Activated B cell treated with CpG ODN at 0.5 μM for 24 hours (primary cell): ENCODE measurements at regions of chr13 and their contacts with region 1.

Region 1: GRCh38 chr13:50244713-50245574 is 229.7 kb downstream of the KCNRG start:
- DNase-seq: no peak
- ATAC-seq: peak; percentile 92
- H3K4me3 Mint-ChIP-seq: peak overlapping the region; percentile 2
- H3K27ac Mint-ChIP-seq: peak overlapping the region; percentile 91
- H3K4me1 Mint-ChIP-seq: peaks cover 40% of the 10 kb centered on the region
- H3K27me3 Mint-ChIP-seq: no peaks in the 10 kb centered on the region
- CTCF ChIP-seq: no peak

Region 2: GRCh38 chr13:50053844-50054243 is 191.1 kb before region 1 on chr13:
- CTCF ChIA-PET with region 1: no interaction called
- POLR2A ChIA-PET with region 1: no interaction called
- intact Hi-C with region 1: no loop called
- DNase-seq: no peak
- ATAC-seq: no peak
- H3K4me3 Mint-ChIP-seq: no peak overlapping the region
- H3K27ac Mint-ChIP-seq: no peak overlapping the region
- H3K4me1 Mint-ChIP-seq: peaks cover 32% of the 10 kb centered on the region
- H3K27me3 Mint-ChIP-seq: no peaks in the 10 kb centered on the region
- CTCF ChIP-seq: no peak

Region 3: DNA sequence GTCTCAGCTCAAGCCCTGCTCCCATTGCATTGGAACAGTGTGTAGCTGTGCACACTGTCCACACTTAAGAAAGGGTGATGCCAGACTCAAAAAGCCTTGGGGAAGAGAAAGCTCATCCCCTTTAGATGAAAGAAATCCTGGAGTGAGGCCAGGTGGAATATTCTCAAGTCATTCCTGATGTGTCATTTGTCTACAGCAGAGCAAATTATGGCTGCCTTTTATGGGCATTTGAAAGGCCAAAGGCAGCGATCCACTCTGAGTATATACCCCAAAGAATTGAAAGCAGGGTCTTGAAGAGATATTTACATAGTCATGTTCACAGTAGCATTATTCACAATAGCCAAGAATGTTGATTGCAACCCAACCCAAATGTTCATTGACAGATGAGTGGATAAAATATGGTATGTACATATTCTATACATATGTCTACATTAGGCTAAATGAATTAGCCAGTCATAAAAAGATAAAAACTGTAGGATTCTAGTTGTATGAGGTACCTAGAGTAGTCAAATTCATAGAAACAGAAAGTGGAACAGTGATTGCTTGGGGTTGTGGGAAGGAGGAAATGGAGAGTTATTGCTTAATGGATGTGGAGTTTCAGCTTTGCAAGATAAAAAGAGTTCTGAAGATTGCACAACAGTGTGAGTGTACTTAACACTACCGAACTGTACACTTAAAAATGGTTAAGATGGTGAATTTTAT is 14.8 kb before region 1 on chr13:
- CTCF ChIA-PET with region 1: interaction called, 3 read pairs
- POLR2A ChIA-PET with region 1: interaction called, 4 read pairs
- intact Hi-C with region 1: loop called (anchors 2 kb)
- DNase-seq: no peak
- ATAC-seq: peak; percentile 49
- H3K4me3 Mint-ChIP-seq: no peak overlapping the region
- H3K27ac Mint-ChIP-seq: peak overlapping the region; percentile 1
- H3K4me1 Mint-ChIP-seq: peaks cover 40% of the 10 kb centered on the region
- H3K27me3 Mint-ChIP-seq: no peaks in the 10 kb centered on the region
- CTCF ChIP-seq: no peak

Region 4: GRCh38 chr13:50284540-50284939 is 39.6 kb after region 1 on chr13:
- CTCF ChIA-PET with region 1: no interaction called
- POLR2A ChIA-PET with region 1: no interaction called
- intact Hi-C with region 1: loop called (anchors 5 kb)
- DNase-seq: no peak
- ATAC-seq: peak; percentile 52
- H3K4me3 Mint-ChIP-seq: no peak overlapping the region
- H3K27ac Mint-ChIP-seq: no peak overlapping the region
- H3K4me1 Mint-ChIP-seq: peaks cover 14% of the 10 kb centered on the region
- H3K27me3 Mint-ChIP-seq: no peaks in the 10 kb centered on the region
- CTCF ChIP-seq: no peak

Region 5: DNA sequence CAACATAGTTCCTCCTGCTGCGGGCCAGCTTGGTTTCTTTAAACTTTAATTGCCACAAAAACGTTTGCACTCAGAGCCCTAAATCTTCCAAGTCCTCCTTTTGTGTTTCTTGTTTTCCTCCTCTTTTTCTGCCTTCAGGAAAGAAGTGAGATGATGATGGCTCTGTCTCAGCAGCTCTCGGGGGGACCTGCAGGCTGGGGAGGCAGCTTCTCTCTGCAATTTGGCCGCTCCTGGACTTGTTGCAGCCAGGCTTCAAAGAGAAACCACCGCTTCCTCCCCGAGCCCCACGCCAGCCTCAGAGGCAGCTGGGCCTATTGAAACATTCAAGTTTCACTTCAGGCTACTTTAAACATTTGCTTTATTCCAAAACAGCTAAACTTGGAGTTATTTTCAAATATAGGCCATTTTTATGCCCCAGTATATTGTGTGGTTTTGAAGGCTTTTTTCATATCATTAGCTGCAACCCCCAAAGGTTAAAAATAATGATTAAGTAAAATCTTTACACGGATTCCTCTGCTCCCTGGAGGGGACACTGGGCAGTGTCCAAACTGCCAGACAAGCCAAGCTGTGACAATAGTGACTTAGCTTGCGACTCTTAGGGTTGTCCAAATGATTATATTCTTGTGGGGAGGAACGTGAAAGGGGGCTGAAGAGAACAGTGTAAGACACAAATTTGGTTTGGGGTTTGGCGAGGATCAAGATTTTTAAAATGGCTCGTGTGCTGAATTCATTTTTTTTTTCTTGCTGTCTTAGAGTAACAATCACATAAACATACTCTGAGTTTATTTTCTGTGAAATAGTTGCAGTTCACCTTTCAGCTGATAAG is 267.7 kb after region 1 on chr13:
- CTCF ChIA-PET with region 1: interaction called, 4 read pairs
- POLR2A ChIA-PET with region 1: interaction called, 5 read pairs
- intact Hi-C with region 1: loop called (anchors 2 kb)
- DNase-seq: peak; percentile 40
- ATAC-seq: peak; percentile 81
- H3K4me3 Mint-ChIP-seq: no peak overlapping the region
- H3K27ac Mint-ChIP-seq: no peak overlapping the region
- H3K4me1 Mint-ChIP-seq: peaks cover 3% of the 10 kb centered on the region
- H3K27me3 Mint-ChIP-seq: no peaks in the 10 kb centered on the region
- CTCF ChIP-seq: no peak

Region 6: GRCh38 chr13:50598338-50598737 is 353.4 kb after region 1 on chr13:
- CTCF ChIA-PET with region 1: no interaction called
- POLR2A ChIA-PET with region 1: no interaction called
- intact Hi-C with region 1: no loop called
- DNase-seq: no peak
- ATAC-seq: peak; percentile 56
- H3K4me3 Mint-ChIP-seq: peak overlapping the region; percentile 33
- H3K27ac Mint-ChIP-seq: peak overlapping the region; percentile 82
- H3K4me1 Mint-ChIP-seq: peaks cover 69% of the 10 kb centered on the region
- H3K27me3 Mint-ChIP-seq: no peaks in the 10 kb centered on the region
- CTCF ChIP-seq: no peak